SK-N-SH (cell line): ENCODE measurements at regions of chr19 and their contacts with region 1.

Region 1: GRCh38 chr19:6048808-6049405 is 61.4 kb downstream of the RFX2 start:
- DNase-seq: peak; percentile 91
- H3K4me3 ChIP-seq: peak overlapping the region in 1 of 2 experiments; percentile 5; a peak in 1 of 4 replicates
- H3K27ac ChIP-seq: peak overlapping the region in 1 of 2 experiments; percentile 35; a peak in 1 of 4 replicates
- H3K4me1 ChIP-seq: peaks cover 0 to 3% of the 10 kb centered on the region in 2 experiments; a peak in 1 of 4 replicates
- H3K27me3 ChIP-seq: no peaks in the 10 kb centered on the region
- CTCF ChIP-seq: peak; percentile 85
- EP300 ChIP-seq: no peak
- RAD21 ChIP-seq: peak; percentile 96

Region 2: GRCh38 chr19:5870986-5871394 is 177.9 kb before region 1 on chr19:
- CTCF ChIA-PET with region 1: no interaction called
- POLR2A ChIA-PET with region 1: no interaction called
- DNase-seq: peak; percentile 8
- H3K4me3 ChIP-seq: no peak overlapping the region
- H3K27ac ChIP-seq: no peak overlapping the region
- H3K4me1 ChIP-seq: no peaks in the 10 kb centered on the region
- H3K27me3 ChIP-seq: no peaks in the 10 kb centered on the region
- CTCF ChIP-seq: no peak
- EP300 ChIP-seq: no peak
- RAD21 ChIP-seq: no peak

Region 3: DNA sequence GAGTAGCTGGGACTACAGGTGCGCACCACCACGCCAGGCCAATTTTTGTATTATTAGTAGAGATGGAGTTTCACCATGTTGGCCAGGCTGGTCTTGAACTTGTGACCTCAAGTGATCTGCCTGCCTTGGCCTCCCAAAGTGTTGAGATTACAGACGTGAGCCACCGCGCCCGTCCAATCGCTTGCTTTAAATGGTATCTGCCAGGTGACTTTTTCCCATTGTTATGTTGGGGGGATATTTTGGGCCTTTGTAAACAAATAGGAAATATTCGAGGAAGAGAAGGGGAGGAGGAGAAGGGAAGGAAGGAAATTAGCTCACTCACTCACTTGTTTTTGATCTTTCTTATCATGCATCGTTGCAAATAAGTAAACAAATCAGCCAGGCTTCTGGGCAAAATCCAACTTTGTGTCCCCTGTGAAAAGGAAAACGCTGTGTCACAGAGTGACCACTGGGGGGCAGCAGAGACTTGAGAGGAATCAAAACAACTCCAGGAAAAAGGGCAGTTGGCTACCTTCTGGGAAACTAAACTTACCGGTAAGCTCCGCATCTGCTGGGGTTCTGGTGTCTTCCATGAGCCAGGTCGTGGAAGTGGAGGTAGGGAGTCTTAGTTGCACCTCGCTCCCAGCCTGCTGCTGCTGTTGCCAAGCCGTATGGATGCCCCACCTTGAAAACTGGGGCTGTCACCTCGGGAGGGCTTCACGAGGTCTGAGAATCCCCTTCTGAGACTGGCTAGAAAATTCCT is 61.7 kb before region 1 on chr19:
- CTCF ChIA-PET with region 1: interaction called, 50 read pairs
- POLR2A ChIA-PET with region 1: no interaction called
- DNase-seq: peak; percentile 79
- H3K4me3 ChIP-seq: peak overlapping the region in 1 of 2 experiments; percentile 9; a peak in 1 of 4 replicates
- H3K27ac ChIP-seq: no peak overlapping the region
- H3K4me1 ChIP-seq: peaks cover 3 to 9% of the 10 kb centered on the region in 2 experiments; a peak in 2 of 4 replicates
- H3K27me3 ChIP-seq: no peaks in the 10 kb centered on the region
- CTCF ChIP-seq: peak; percentile 92
- EP300 ChIP-seq: no peak
- RAD21 ChIP-seq: peak; percentile 94

Region 4: DNA sequence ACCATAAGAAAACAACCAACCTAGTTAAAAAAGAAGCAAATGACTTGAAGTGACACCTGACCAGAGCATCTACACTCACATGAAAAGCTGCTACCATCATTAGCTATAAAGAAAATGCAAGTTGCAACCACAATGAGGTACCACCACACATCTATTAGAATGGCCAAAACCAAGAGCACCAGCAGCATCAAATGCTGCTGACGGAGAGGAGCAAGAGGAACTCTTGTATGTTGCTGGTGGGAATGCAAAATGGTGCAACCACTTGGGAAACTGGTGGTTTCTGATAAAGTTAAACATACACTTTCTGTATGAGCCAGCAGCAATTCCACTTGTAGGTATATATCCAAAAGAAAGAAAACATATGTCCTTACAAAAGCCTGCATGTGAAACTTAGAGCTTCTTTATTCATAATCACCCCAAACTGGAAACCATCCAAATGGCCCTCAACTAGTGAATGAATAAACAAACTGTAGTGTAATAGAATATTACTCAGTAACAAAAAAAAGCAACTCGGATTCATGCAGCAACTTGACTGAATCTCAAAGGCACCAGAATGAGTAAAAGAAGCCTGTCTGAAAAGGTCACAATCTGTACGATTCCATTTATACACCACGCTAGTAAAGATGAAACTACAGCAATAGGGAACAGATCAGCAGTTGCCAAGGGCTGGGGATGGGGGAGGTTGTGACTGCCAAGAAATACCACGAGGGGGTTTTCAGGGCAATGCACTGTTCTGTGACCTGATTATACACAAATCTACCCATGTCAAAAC is 10.1 kb before region 1 on chr19:
- CTCF ChIA-PET with region 1: interaction called, 42 read pairs
- POLR2A ChIA-PET with region 1: no interaction called
- DNase-seq: no peak
- H3K4me3 ChIP-seq: no peak overlapping the region
- H3K27ac ChIP-seq: no peak overlapping the region
- H3K4me1 ChIP-seq: no peaks in the 10 kb centered on the region
- H3K27me3 ChIP-seq: no peaks in the 10 kb centered on the region
- CTCF ChIP-seq: no peak
- EP300 ChIP-seq: no peak
- RAD21 ChIP-seq: no peak

Region 5: GRCh38 chr19:6076675-6077463 is 28.0 kb after region 1 on chr19:
- CTCF ChIA-PET with region 1: interaction called, 13 read pairs
- POLR2A ChIA-PET with region 1: no interaction called
- DNase-seq: no peak
- H3K4me3 ChIP-seq: no peak overlapping the region
- H3K27ac ChIP-seq: peak overlapping the region; percentile 40 to 91; a peak in 3 of 4 replicates
- H3K4me1 ChIP-seq: peaks cover 0 to 20% of the 10 kb centered on the region in 2 experiments; a peak in 3 of 4 replicates
- H3K27me3 ChIP-seq: no peaks in the 10 kb centered on the region
- CTCF ChIP-seq: no peak
- EP300 ChIP-seq: peak in 1 of 2 experiments; percentile 58; a peak in 1 of 4 replicates
- RAD21 ChIP-seq: no peak

Region 6: DNA sequence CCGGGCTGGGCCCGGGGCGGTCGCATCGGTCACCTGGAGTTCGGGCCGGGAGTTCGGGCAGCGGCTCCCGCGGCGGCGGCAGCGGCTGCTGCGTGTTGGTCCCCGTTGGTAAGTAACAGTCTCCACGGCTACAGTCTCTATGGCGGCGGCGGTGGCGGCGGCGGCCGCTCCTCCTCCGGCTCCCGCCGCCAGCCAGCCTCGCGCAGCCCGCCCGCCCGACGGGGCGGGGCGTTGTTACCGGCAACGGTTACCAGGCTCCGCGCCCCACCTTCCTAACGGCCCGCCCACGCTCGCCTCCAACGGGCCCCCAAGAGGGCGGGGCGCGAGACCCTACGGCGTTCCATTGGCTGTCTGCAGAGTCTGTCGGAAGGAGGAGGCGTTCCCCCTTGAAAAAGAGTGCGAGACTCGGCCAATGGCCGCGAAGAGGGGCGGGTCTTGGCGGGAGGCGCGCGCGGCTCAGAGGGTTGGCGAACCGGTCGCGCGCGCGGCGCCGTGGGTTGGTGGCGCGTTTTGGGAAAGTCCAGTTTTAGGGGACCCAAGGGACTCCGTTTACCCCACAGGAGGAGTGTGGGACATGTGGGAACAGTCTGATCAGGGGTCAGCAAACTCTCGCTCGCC is 61.6 kb after region 1 on chr19 and contains the start of gene RFX2:
- CTCF ChIA-PET with region 1: interaction called, 65 read pairs
- POLR2A ChIA-PET with region 1: no interaction called
- DNase-seq: peak; percentile 98
- H3K4me3 ChIP-seq: peak within 1 kb of the TSS; percentile 64 to 73
- H3K27ac ChIP-seq: peak within 1 kb of the TSS in 1 of 2 experiments; percentile 91; a peak in 3 of 4 replicates
- H3K4me1 ChIP-seq: peaks cover 0 to 6% of the 10 kb centered on the region in 2 experiments; a peak in 1 of 4 replicates
- H3K27me3 ChIP-seq: no peaks in the 10 kb centered on the region
- CTCF ChIP-seq: no peak
- EP300 ChIP-seq: peak in 1 of 2 experiments; percentile 15; a peak in 1 of 4 replicates
- RAD21 ChIP-seq: no peak
- polyA plus RNA-seq, gene RFX2: 10.0 and 12.6 TPM in 2 replicates

Region 7: GRCh38 chr19:6133231-6133630 is 84.3 kb after region 1 on chr19:
- CTCF ChIA-PET with region 1: interaction called, 27 read pairs
- POLR2A ChIA-PET with region 1: no interaction called
- DNase-seq: no peak
- H3K4me3 ChIP-seq: no peak overlapping the region
- H3K27ac ChIP-seq: no peak overlapping the region
- H3K4me1 ChIP-seq: no peaks in the 10 kb centered on the region
- H3K27me3 ChIP-seq: no peaks in the 10 kb centered on the region
- CTCF ChIP-seq: no peak
- EP300 ChIP-seq: no peak
- RAD21 ChIP-seq: no peak

Region 8: DNA sequence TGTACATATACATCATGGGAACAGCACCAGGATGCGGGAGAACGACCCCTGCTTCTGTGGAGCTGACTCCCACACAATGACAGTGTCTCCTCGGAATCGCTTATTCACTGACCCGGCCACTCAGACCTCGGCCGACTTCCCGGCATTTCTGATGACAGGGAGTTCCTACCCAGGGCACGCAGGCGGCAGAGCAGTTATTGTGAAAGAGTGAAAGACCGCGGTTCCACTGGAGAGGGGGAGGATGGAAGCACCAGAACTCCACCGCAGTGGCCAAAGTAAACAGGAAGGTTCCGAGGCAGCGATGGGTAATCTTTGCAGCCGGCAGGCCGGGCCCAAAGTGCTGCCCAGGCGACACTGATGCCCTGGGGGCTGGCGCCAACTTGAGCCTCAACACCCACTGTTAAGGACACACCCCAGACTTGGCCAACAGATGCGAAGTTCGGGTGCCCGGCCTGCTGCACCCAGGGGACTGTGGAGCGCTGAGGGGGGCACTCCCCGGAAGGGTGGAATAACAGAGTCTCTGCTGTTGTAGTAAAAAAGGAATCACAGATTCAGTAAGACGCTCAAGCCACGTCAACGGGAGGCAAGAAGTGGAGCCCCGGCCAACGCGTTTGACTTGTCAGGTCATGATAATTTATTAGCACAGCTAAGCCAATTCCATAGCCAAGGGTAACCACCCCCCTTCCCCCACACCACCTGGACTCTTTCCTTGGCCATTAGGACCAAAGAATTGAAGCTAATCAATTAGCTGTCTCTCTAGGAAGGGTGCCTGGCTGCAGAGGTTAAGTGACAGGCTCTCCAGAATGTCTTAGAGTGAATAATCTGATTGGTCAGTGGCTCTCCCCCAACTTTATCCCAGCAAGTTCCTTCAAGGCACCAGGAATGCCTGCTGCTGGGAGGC is 225.0 kb after region 1 on chr19:
- CTCF ChIA-PET with region 1: interaction called, 14 read pairs
- POLR2A ChIA-PET with region 1: no interaction called
- DNase-seq: peak; percentile 74
- H3K4me3 ChIP-seq: peak overlapping the region; percentile 15 to 54
- H3K27ac ChIP-seq: peak overlapping the region; percentile 82 to 99
- H3K4me1 ChIP-seq: peaks cover 44 to 93% of the 10 kb centered on the region in 2 experiments
- H3K27me3 ChIP-seq: no peaks in the 10 kb centered on the region
- CTCF ChIP-seq: no peak
- EP300 ChIP-seq: no peak
- RAD21 ChIP-seq: no peak